Gastrocnemius medialis (tissue), 4 donors: ENCODE measurements at regions of chr10 and their contacts with region 1.

Region 1: DNA sequence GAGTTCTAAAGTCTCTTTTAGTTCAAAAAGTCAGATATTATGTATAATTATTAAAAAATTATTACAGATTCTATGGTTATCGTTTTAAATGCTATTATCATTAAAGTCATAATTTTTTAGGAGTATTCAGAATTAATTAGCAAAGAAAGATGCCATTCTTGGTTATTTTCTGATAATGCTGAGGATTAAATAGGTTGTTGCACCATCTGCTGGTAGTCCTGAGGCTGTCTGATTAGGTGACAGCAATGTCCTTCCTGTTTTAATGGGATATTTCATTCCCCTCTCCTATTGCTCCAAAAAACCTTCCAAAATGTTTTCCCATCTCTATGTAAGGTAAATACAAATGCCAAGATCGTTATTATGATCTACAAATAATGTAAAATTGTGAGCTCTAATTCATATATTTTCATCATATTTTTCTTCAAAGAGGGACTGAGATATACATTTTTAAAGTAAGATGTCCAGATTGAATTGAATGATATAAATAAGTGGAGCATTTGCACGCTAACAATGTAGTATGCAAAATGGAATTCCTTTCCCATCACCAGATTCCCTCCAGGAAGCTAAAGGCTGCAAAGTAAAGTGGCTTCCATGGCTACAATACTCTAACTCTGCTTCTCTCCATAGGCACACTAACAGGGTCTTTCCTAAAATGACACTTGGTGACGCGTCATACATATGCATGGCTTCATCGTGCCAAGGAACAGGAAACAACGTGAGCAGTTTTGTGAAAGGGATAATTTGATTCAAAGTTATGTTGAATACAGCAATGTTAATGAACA is 58.8 kb upstream of the AKR1E2 start:
- DNase-seq: no peak
- ATAC-seq: peak; percentile 74 to 76
- H3K4me3 ChIP-seq: no peak overlapping the region
- H3K27ac ChIP-seq: peak overlapping the region; percentile 27 to 65 (median 56)
- H3K4me1 ChIP-seq: peaks cover 39 to 50% of the 10 kb centered on the region in 2 donors
- H3K27me3 ChIP-seq: no peaks in the 10 kb centered on the region
- CTCF ChIP-seq: peak; percentile 60 to 76 (median 64)
- POLR2A ChIP-seq: no peak

Region 2: DNA sequence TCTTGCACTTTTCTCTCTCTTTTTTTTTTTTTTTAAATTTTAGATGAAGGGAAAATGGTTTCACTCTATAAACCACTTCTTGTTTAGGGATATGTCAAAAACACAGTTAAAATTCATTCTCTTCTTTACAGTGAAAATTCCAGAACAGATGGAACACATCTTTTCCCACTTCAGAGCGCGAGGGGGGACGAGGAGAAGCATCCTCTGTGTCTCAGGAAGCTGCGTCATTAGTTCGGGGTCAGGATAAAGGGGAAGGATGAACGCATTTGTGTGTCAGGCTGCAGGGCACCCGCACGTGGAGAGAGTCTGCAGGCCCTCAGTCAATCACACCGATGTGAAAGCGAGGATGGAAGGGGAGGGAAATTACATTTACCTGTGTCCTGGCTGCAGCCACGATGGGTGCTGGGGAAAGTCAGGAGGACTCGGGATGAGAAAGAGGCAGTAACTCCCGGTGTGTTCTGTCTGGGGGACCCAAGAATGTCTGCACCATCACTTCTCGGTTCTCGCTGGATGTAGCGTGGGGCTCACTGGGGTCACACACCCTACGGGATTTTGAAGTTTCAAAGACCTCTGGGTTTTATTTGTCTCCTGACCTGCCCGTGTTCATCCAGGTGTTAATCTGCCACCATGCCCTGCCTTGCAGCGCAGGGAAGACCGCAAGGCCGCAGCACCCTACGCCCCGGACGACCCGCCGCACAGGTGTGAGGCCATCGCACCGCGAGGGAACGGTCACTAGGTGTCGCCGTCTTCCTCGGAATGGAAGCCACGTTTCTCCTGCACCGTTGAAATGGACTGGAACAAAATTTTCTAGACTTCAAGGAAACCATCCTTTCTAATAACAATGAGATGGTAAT is 1527.9 kb before region 1 on chr10:
- in situ Hi-C with region 1: loop called in 2 of 4 experiments (anchors 10 kb)
- intact Hi-C with region 1: loop called (anchors 1 kb)
- DNase-seq: peak; percentile 38 to 46
- ATAC-seq: peak; percentile 80 to 90
- H3K4me3 ChIP-seq: no peak overlapping the region
- H3K27ac ChIP-seq: peak overlapping the region in 3 of 4 donors; percentile 56 to 66 (median 59)
- H3K4me1 ChIP-seq: no peaks in the 10 kb centered on the region
- H3K27me3 ChIP-seq: no peaks in the 10 kb centered on the region
- CTCF ChIP-seq: peak; percentile 78 to 91 (median 86)
- POLR2A ChIP-seq: no peak

Region 3: GRCh38 chr10:3467052-3467951 is 1299.9 kb before region 1 on chr10:
- in situ Hi-C with region 1: loop called in 2 of 4 experiments (anchors 25 kb)
- intact Hi-C with region 1: loop called (anchors 5 kb)
- DNase-seq: peak; percentile 83 to 86
- ATAC-seq: peak; percentile 67 to 77
- H3K4me3 ChIP-seq: peak overlapping the region; percentile 34 to 41 (median 38)
- H3K27ac ChIP-seq: peak overlapping the region; percentile 86 to 96 (median 92)
- H3K4me1 ChIP-seq: peaks cover 25 to 43% of the 10 kb centered on the region in 2 donors
- H3K27me3 ChIP-seq: no peaks in the 10 kb centered on the region
- CTCF ChIP-seq: peak; percentile 26 to 78 (median 68)
- POLR2A ChIP-seq: peak; percentile 53 to 62

Region 4: GRCh38 chr10:4344511-4344994 is 422.7 kb before region 1 on chr10:
- in situ Hi-C with region 1: loop called in 1 of 4 experiments (anchors 25 kb)
- intact Hi-C with region 1: loop called (anchors 5 kb)
- DNase-seq: peak; percentile 68 to 77
- ATAC-seq: peak; percentile 97 to 98
- H3K4me3 ChIP-seq: no peak overlapping the region
- H3K27ac ChIP-seq: peak overlapping the region; percentile 60 to 89 (median 76)
- H3K4me1 ChIP-seq: peaks cover 19 to 23% of the 10 kb centered on the region in 2 donors
- H3K27me3 ChIP-seq: no peaks in the 10 kb centered on the region
- CTCF ChIP-seq: peak in 3 of 5 experiments; percentile 10 to 25 (median 13)
- POLR2A ChIP-seq: no peak

Region 5: DNA sequence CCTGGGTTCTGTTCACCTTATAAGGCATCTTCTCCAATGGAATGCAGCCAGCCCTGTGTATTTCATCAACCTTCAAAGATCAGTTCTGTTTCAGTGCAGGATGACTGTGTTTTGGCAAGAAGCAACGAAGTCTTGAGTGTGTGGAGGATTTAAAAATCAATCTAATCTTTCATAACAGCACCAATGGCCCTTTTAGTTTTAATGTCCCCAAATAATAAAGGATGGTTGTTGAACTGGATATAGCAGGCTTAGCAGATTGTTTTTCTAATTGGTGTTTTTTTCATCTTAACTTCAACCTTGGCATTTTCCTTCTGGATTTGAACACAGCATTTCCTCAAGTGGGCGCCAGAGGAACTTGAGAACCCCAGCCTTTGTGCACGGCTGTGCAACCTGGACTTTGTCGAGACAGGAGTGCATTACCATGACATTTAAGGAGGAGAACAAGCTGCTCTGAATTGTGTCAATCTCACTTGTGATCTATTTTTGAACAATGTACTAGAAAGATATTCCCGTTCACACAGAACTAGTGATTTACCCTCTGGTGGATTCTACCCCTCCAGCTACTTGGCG is 254.5 kb before region 1 on chr10:
- in situ Hi-C with region 1: loop called in 2 of 4 experiments (anchors 25 kb)
- intact Hi-C with region 1: loop called (anchors 2 kb)
- DNase-seq: peak in 1 of 2 donors; percentile 22
- ATAC-seq: peak in 1 of 2 donors; percentile 40
- H3K4me3 ChIP-seq: no peak overlapping the region
- H3K27ac ChIP-seq: no peak overlapping the region
- H3K4me1 ChIP-seq: peaks cover 0 to 19% of the 10 kb centered on the region in 2 donors
- H3K27me3 ChIP-seq: no peaks in the 10 kb centered on the region
- CTCF ChIP-seq: peak in 4 of 5 experiments; percentile 20 to 38 (median 24)
- POLR2A ChIP-seq: no peak